GM23248 (cell line): ENCODE measurements at regions of chr12 and their contacts with region 1.

Region 1: GRCh38 chr12:58540480-58541299 is 379.6 kb downstream of the LRIG3 start:
- DNase-seq: peak; percentile 89
- H3K4me3 ChIP-seq: peak overlapping the region; percentile 27; the same call in 1 of the 2 replicates
- H3K27ac ChIP-seq: peak overlapping the region; percentile 11
- H3K4me1 ChIP-seq: peaks cover 34% of the 10 kb centered on the region
- H3K27me3 ChIP-seq: no peaks in the 10 kb centered on the region

Region 2: DNA sequence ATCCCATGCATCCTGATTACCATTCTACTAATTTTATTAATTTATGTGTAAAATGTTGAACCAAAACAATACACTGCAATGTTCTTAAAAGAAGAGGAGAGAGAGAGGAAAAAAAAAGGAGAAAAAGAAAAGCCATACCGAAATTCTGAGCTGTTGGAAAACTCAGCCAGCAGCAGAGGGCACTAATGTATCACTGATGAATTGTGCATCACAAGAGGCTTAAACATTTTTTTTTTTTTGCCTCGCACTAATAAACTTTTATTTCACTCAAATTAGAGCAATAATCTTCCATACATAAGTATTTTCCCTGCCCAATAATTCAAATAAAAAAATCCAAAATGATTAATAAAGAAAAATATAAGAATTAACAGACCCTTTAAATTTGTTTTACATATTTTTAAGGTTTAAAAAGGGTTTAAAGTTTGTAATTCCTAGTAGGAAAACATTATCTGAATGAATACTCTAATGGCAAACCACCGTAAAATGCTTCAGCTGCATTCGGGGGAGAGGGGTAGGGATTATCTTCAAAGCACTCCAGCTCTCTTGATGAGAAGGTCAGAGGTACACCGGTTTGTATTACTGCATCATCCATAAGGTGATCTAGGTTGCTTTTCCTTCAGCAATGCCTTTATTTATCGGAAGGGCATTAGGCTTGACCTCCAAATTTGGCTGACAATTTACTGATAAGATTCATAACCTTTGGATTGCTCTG is 557.4 kb before region 1 on chr12:
- in situ Hi-C with region 1: loop called (anchors 25 kb)
- DNase-seq: peak; percentile 75
- H3K4me3 ChIP-seq: no peak overlapping the region
- H3K27ac ChIP-seq: no peak overlapping the region
- H3K4me1 ChIP-seq: peaks cover 6% of the 10 kb centered on the region; the same call in 1 of the 2 replicates
- H3K27me3 ChIP-seq: no peaks in the 10 kb centered on the region

Region 3: DNA sequence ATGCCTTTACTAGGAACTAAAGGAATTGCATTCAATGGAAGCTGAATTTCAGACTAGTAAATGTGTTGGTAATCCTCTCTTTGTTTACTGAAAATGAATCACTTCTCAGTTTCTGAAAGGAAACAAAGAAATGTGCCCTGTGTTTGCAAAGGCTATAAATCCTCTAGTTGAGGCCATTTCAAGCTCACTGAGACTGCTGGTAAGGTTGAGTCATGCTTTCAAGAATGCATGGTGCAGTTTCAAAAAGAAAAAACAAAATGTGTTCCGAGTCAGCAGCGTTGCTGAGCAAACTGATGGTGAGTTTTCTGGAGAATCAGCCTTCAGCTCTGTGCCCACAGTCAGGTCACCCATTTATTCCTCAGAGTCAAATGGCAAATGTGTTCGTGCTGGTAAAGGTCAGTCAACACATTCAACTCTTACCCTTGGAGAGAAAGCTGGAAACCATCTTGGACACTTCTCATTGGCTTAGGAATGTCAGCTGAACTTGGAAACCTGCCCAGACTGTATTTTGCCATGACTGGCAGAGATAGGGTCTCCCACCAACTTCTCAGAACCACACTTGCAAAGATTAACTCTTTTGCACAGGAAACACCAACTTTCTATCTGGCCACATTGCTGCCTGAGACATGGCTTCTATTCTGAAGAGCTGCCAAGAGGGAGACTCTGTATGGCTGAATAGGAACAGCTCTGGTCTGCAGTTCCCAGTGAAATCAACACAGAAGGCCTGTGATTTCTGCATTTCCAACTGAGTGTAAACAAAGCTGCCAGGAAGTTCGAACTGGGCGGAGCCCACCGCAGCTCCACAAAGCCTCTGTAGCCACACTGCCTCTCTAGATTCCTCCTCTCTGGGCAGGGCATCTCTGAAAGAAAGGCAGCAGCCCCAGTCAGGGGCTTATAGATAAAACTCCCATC is 115.0 kb before region 1 on chr12:
- in situ Hi-C with region 1: no loop called
- DNase-seq: peak; percentile 95
- H3K4me3 ChIP-seq: peak overlapping the region; percentile 40
- H3K27ac ChIP-seq: peak overlapping the region; percentile 93
- H3K4me1 ChIP-seq: peaks cover 37% of the 10 kb centered on the region
- H3K27me3 ChIP-seq: no peaks in the 10 kb centered on the region

Region 4: GRCh38 chr12:58888131-58888783 is 347.6 kb after region 1 on chr12:
- in situ Hi-C with region 1: loop called (anchors 25 kb)
- DNase-seq: peak; percentile 74
- H3K4me3 ChIP-seq: no peak overlapping the region
- H3K27ac ChIP-seq: peak overlapping the region; percentile 20; the same call in 1 of the 2 replicates
- H3K4me1 ChIP-seq: peaks cover 11% of the 10 kb centered on the region; the same call in 1 of the 2 replicates
- H3K27me3 ChIP-seq: no peaks in the 10 kb centered on the region